Activated T-helper 1 cell treated with anti-CD3 and anti-CD28 coated beads, Interleukin-12 subunit alpha, Interleukin-12 subunit beta, Interleukin-2, Interleukin-4 antibody, amounts not matched to agents 30 ng/mL and 10 ng/mL and 1 ng/mL, durations not matched to agents 14 hours and 24 hours and 36 hours (primary cell): ENCODE measurements at regions of chr20 and their contacts with region 1.

Region 1: GRCh38 chr20:2451939-2452732 is 18.5 kb downstream of the SNRPB start:
- DNase-seq: peak; percentile 50
- H3K4me3 Mint-ChIP-seq: no peak overlapping the region
- H3K27ac Mint-ChIP-seq: no peak overlapping the region
- H3K4me1 Mint-ChIP-seq: peaks cover 30% of the 10 kb centered on the region
- H3K27me3 Mint-ChIP-seq: peaks cover 2% of the 10 kb centered on the region

Region 2: GRCh38 chr20:2206957-2207769 is 245.0 kb before region 1 on chr20:
- intact Hi-C with region 1: loop called (anchors 2 kb)
- DNase-seq: peak; percentile 52
- H3K4me3 Mint-ChIP-seq: peak overlapping the region; percentile 80
- H3K27ac Mint-ChIP-seq: peak overlapping the region; percentile 61
- H3K4me1 Mint-ChIP-seq: no peaks in the 10 kb centered on the region
- H3K27me3 Mint-ChIP-seq: peaks cover 22% of the 10 kb centered on the region

Region 3: DNA sequence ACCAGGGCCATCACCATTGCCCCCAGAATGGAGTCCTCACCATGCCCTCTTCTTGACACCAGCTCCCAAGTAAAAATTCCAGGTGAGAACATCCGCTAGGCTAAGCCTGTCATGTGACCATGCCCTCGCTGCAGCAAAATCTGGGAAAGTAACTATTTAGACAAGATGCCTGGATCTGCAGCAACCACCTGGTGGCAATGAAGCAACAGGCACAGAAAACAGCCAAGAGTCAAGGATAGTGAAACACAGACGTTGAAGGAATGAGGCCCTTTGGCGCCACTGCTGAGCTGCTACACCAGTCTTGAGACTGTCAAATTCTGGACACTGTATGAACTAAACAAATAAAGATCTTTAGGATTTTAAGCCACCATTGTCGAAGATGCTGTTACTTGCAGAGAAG is 101.5 kb before region 1 on chr20:
- intact Hi-C with region 1: loop called (anchors 1 kb)
- DNase-seq: no peak
- H3K4me3 Mint-ChIP-seq: no peak overlapping the region
- H3K27ac Mint-ChIP-seq: no peak overlapping the region
- H3K4me1 Mint-ChIP-seq: peaks cover 9% of the 10 kb centered on the region
- H3K27me3 Mint-ChIP-seq: peaks cover 44% of the 10 kb centered on the region

Region 4: DNA sequence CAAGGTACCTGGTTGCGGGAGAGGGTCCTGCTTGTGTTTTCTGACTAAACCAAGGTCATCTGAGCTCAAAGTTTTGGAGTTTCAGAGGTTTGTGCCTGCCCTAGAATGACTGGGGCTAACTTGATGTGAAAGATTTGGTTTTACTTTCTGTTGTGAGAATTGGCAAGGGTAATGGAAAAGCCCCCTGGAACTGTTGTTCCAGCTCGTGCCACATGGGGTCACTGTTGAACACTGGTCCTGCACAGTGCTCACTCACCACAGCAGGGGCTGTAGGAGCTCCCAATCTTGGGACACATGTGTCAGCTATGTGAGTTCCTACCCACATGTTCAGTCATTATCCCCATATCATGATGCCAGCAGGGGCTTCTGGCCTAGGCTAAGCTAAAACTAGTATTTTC is 65.0 kb before region 1 on chr20:
- intact Hi-C with region 1: loop called (anchors 1 kb)
- DNase-seq: peak; percentile 59
- H3K4me3 Mint-ChIP-seq: no peak overlapping the region
- H3K27ac Mint-ChIP-seq: peak overlapping the region; percentile 80
- H3K4me1 Mint-ChIP-seq: peaks cover 9% of the 10 kb centered on the region
- H3K27me3 Mint-ChIP-seq: peaks cover 6% of the 10 kb centered on the region